ENCODE measurements at regions of chr9 and their contacts with region 1.

Region 1: DNA sequence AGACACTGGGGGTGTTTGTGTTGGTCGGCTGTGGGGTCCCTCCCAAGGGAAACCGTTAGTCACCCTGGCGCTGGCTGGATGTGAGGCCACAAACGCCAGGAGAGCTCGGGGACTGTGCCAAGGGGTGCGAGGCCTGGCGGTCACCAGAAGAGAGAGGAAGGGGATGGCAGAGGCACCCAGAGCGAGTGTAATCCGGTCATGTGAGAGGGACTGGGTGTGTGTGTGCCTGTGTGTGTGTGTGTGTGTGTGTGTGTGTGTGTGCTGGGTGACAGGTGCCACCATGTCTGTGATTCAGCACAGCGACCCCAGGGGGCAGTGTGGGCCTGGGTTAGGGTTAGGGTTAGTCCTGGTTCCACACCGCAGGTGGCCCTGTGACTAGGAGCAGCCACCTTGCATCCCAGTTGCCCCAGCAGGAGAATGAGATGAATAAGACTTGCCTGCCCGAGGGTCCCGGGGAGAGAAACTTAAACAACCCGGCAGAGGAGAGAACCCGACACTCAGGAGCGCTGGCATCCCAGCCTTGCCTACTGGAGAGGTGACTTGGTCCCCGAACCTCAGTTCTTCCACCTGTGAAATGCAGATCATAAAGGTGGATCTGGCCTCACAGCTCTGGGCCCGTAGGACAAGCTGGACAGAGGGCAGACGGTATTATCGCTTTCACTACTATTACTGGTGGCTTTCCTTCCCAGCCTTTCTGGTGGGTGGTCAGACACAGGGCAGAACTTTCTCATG is 1.4 kb upstream of the ADAMTSL2 start:
- DNase-seq: peak; percentile 39
- H3K4me3 ChIP-seq: no peak overlapping the region
- H3K27ac ChIP-seq: no peak overlapping the region
- H3K4me1 ChIP-seq: peaks cover 6% of the 10 kb centered on the region
- H3K27me3 ChIP-seq: peaks cover 5% of the 10 kb centered on the region
- CTCF ChIP-seq: peak; percentile 34 to 73 (median 55)
- POLR2A ChIP-seq: no peak

Region 2: DNA sequence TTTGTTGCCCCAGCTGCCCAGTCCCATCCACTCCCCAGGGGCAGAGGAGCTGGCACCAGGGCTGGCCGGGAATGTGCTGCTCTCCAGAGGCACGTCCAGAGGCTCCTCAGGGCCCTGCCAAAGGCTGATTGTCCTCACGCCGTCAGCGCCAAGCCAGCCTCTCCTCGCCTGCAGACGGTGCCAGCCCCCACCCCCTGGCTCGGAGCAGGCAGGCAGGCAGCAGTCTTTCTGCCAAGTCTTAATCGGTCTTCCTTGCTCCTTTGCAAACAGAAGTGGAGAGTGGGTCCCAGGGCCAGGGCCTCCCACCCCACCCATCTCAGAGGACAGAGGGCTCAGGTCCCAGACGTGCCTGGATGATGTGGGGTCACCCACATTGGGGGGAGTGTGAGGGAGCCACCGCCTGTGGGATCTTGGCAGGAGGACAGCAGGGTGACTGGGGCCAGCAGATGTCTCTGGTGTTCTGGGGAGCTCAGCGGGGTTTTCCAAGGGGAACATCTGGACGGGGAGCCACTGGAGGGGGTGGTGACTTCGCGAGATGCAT is 39.8 kb after region 1 on chr9:
- intact Hi-C with region 1: no loop called
- DNase-seq: peak; percentile 77
- H3K4me3 ChIP-seq: no peak overlapping the region
- H3K27ac ChIP-seq: no peak overlapping the region
- H3K4me1 ChIP-seq: peaks cover 10% of the 10 kb centered on the region
- H3K27me3 ChIP-seq: no peaks in the 10 kb centered on the region
- CTCF ChIP-seq: peak in 2 of 4 experiments; percentile 5
- POLR2A ChIP-seq: no peak

Region 3: DNA sequence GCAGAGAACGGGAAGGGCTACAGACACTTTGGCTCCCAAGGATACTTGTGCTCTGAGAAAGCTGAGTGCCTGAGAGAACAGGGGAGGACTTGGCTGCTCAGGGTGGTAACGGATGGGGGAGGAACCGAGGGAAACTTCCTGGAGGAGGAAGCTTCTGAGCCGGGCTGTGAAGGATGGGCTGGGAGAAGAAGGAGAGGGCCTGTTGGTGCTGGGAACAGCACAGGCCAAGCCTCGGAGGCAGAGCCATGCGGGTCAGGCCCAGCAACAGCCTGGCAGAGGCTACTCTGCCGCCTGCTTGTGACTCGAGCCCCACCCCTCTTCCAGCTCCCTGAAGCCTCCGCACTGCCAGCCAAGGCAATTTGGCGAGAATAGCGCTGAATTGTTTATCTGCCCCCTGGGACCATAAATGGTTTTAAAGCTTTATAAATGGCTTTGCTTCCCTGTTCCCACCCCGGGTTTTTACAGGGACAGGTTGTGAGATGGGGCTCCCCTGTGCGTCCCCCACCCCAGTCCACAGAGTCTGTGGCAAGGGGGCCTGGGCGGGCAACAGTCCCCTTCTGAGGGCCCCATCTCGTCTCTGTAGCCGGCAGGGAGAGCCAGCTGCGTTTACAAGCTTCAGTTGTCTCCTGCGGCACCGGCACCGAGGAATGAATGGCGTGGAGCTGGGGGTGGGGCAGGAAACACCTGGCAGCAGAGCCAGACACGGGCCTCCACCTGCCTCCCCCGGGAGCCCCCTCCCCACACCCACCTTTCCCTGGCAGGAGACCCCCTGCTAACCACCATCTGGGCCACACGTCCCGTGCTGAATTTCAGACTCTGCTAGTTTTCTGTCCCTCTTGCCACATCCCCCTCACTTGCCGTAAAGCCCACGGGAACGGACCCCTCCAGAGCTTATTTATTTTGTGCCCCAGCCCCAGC is 51.7 kb after region 1 on chr9:
- intact Hi-C with region 1: loop called (anchors 2 kb)
- DNase-seq: peak; percentile 34
- H3K4me3 ChIP-seq: no peak overlapping the region
- H3K27ac ChIP-seq: no peak overlapping the region
- H3K4me1 ChIP-seq: peaks cover 12% of the 10 kb centered on the region
- H3K27me3 ChIP-seq: no peaks in the 10 kb centered on the region
- CTCF ChIP-seq: no peak
- POLR2A ChIP-seq: no peak

Region 4: GRCh38 chr9:133726401-133727276 is 193.5 kb after region 1 on chr9:
- intact Hi-C with region 1: loop called (anchors 2 kb)
- DNase-seq: peak; percentile 51
- H3K4me3 ChIP-seq: no peak overlapping the region
- H3K27ac ChIP-seq: no peak overlapping the region
- H3K4me1 ChIP-seq: no peaks in the 10 kb centered on the region
- H3K27me3 ChIP-seq: no peaks in the 10 kb centered on the region
- CTCF ChIP-seq: peak in 3 of 4 experiments; percentile 28 to 69 (median 58)
- POLR2A ChIP-seq: no peak

Measured in prostate gland (tissue), 2 donors.